ENCODE measurements at regions of chr11 and their contacts with region 1.

Region 1: GRCh38 chr11:126519764-126520734 is 164.6 kb downstream of the ST3GAL4 start:
- DNase-seq: no peak
- H3K4me3 ChIP-seq: no peak overlapping the region
- H3K4me3 Mint-ChIP-seq: no peak overlapping the region
- H3K27ac ChIP-seq: no peak overlapping the region
- H3K27ac Mint-ChIP-seq: peak overlapping the region in 1 of 7 donors; percentile 66
- H3K4me1 ChIP-seq: no peaks in the 10 kb centered on the region
- H3K4me1 Mint-ChIP-seq: no peaks in the 10 kb centered on the region
- H3K27me3 ChIP-seq: no peaks in the 10 kb centered on the region
- H3K27me3 Mint-ChIP-seq: peaks cover 5 to 8% (median 7%) of the 10 kb centered on the region in 3 donors
- CTCF ChIP-seq: no peak

Region 2: GRCh38 chr11:126538071-126538470 is 18.0 kb after region 1 on chr11:
- intact Hi-C with region 1: no loop called
- DNase-seq: no peak
- H3K4me3 ChIP-seq: no peak overlapping the region
- H3K4me3 Mint-ChIP-seq: no peak overlapping the region
- H3K27ac ChIP-seq: no peak overlapping the region
- H3K27ac Mint-ChIP-seq: no peak overlapping the region
- H3K4me1 ChIP-seq: no peaks in the 10 kb centered on the region
- H3K4me1 Mint-ChIP-seq: no peaks in the 10 kb centered on the region
- H3K27me3 ChIP-seq: peaks cover 0 to 3% of the 10 kb centered on the region in 2 donors
- H3K27me3 Mint-ChIP-seq: peaks cover 5 to 7% (median 6%) of the 10 kb centered on the region in 3 donors
- CTCF ChIP-seq: no peak

Region 3: GRCh38 chr11:126660761-126661425 is 140.8 kb after region 1 on chr11:
- intact Hi-C with region 1: no loop called
- DNase-seq: no peak
- H3K4me3 ChIP-seq: no peak overlapping the region
- H3K4me3 Mint-ChIP-seq: no peak overlapping the region
- H3K27ac ChIP-seq: no peak overlapping the region
- H3K27ac Mint-ChIP-seq: no peak overlapping the region
- H3K4me1 ChIP-seq: no peaks in the 10 kb centered on the region
- H3K4me1 Mint-ChIP-seq: no peaks in the 10 kb centered on the region
- H3K27me3 ChIP-seq: no peaks in the 10 kb centered on the region
- H3K27me3 Mint-ChIP-seq: peaks cover 0 to 8% (median 4%) of the 10 kb centered on the region in 3 donors
- CTCF ChIP-seq: no peak

Region 4: DNA sequence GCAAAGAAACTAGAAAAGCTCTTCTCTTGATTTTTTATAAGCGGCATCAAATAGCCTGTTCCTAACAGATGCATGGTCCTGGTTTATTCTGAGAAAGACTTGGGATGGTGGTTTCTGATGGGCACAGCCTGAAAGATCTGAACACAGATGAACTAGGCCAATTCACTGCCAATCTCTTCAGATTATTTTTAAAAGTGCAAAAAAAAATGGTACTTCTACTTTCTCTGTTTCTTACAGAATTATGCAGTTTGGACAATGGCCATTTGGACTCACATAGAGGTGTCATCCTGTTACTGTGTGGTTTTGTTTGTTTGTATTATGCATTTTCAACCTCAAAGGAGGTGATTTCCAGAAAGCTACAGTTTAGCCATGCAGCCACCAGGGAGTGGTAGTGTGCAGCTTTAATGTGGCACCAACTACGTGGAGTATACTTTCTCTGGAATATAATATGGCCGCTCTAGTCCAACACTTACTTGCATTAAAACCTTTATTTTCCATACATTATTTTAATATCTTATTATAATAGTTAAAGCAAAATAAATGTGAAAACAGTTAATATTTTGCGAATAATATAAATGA is 950.3 kb after region 1 on chr11:
- intact Hi-C with region 1: loop called in 1 of 2 experiments (anchors 10 kb)
- DNase-seq: no peak
- H3K4me3 ChIP-seq: no peak overlapping the region
- H3K4me3 Mint-ChIP-seq: no peak overlapping the region
- H3K27ac ChIP-seq: no peak overlapping the region
- H3K27ac Mint-ChIP-seq: no peak overlapping the region
- H3K4me1 ChIP-seq: peaks cover 0 to 3% of the 10 kb centered on the region in 2 donors
- H3K4me1 Mint-ChIP-seq: peaks cover 4% of the 10 kb centered on the region
- H3K27me3 ChIP-seq: no peaks in the 10 kb centered on the region
- H3K27me3 Mint-ChIP-seq: peaks cover 0 to 1% (median 0%) of the 10 kb centered on the region in 3 donors
- CTCF ChIP-seq: no peak

Measured in CD14-positive monocyte (primary cell).